ENCODE measurements at regions of chr2 and their contacts with region 1.

Region 1: GRCh38 chr2:105521205-105521604 is 122.4 kb upstream of the FHL2 start:
- H3K4me3 ChIP-seq: no peak overlapping the region
- H3K27ac ChIP-seq: no peak overlapping the region
- H3K4me1 ChIP-seq: no peaks in the 10 kb centered on the region
- CTCF ChIP-seq: peak; percentile 56; the same call in 1 of the 2 replicates

Region 2: GRCh38 chr2:105337124-105338019 is 183.8 kb before region 1 on chr2 and contains the start of gene C2orf49:
- CTCF ChIA-PET with region 1: interaction called, 83 read pairs
- POLR2A ChIA-PET with region 1: interaction called, 4 read pairs
- H3K4me3 ChIP-seq: peak within 1 kb of the TSS; percentile 89
- H3K27ac ChIP-seq: peak within 1 kb of the TSS; percentile 99
- H3K4me1 ChIP-seq: peaks cover 2% of the 10 kb centered on the region; the same call in 1 of the 2 replicates
- CTCF ChIP-seq: no peak

Region 3: GRCh38 chr2:105344704-105345345 is 176.4 kb before region 1 on chr2:
- CTCF ChIA-PET with region 1: interaction called, 83 read pairs
- POLR2A ChIA-PET with region 1: no interaction called
- H3K4me3 ChIP-seq: no peak overlapping the region
- H3K27ac ChIP-seq: peak overlapping the region; percentile 21
- H3K4me1 ChIP-seq: no peaks in the 10 kb centered on the region
- CTCF ChIP-seq: no peak

Region 4: GRCh38 chr2:105369747-105370690 is 151.2 kb before region 1 on chr2:
- CTCF ChIA-PET with region 1: interaction called, 39 read pairs
- POLR2A ChIA-PET with region 1: no interaction called
- H3K4me3 ChIP-seq: no peak overlapping the region
- H3K27ac ChIP-seq: no peak overlapping the region
- H3K4me1 ChIP-seq: no peaks in the 10 kb centered on the region
- CTCF ChIP-seq: peak; percentile 88

Region 5: GRCh38 chr2:105510761-105511610 is 10.2 kb before region 1 on chr2:
- CTCF ChIA-PET with region 1: interaction called, 12 read pairs
- POLR2A ChIA-PET with region 1: no interaction called
- H3K4me3 ChIP-seq: no peak overlapping the region
- H3K27ac ChIP-seq: no peak overlapping the region
- H3K4me1 ChIP-seq: no peaks in the 10 kb centered on the region
- CTCF ChIP-seq: no peak

Region 6: DNA sequence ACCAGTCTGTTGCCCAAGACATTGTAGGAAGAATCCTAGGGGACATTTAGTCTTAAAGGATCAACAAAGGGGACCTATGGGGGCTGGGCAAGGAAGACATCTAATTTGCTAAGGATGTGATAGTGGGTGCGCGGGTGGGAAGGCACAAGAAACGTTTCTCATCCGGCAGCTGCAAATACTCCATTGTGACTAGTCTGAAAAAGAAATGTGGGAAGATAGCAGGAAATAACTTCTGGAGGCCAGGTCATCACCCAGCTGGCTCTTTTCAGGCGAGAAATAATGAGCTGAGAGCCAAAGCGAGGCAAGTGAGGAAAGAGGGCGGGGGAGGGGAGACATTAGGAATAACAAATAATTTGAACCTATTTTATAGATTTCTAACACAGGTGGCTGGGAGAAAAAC is 153.2 kb after region 1 on chr2:
- CTCF ChIA-PET with region 1: no interaction called
- POLR2A ChIA-PET with region 1: no interaction called
- H3K4me3 ChIP-seq: no peak overlapping the region
- H3K27ac ChIP-seq: no peak overlapping the region
- H3K4me1 ChIP-seq: no peaks in the 10 kb centered on the region
- CTCF ChIP-seq: no peak

Measured in HEK293 (cell line).